ENCODE measurements at regions of chr7 and their contacts with region 1.

Region 1: DNA sequence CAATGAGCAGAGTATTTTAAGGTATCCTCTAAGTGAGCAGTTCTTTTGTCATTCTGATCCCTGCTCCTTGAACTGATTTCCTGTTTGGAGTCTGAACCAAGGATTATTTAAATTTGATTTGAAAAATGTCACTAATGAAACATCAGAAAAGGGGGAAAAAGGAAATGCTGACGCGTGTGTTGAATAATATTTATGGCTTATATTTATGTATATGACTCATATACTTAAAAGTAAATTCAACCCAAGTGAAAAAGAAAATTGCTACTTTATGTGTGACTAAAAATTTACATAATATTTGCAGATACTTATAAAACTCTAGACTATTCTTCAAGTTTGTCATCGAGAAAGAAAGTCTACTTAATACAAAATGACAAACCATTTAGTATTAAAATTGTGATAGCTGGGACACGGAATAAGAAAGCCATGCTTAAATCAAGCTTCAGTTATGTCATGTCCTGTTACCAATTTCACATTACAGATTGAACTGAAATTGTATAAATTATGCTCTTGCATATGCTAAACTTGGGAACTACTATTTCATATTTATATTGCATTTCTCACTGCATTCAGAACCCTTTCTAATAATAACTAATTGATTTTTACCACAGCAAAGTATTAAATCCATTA is 649.9 kb downstream of the MAGI2 start:
- DNase-seq: no peak
- ATAC-seq: no peak
- H3K4me3 ChIP-seq: no peak overlapping the region
- H3K27ac ChIP-seq: no peak overlapping the region
- H3K4me1 ChIP-seq: no peaks in the 10 kb centered on the region
- H3K27me3 ChIP-seq: no peaks in the 10 kb centered on the region
- CTCF ChIP-seq: no peak

Region 2: DNA sequence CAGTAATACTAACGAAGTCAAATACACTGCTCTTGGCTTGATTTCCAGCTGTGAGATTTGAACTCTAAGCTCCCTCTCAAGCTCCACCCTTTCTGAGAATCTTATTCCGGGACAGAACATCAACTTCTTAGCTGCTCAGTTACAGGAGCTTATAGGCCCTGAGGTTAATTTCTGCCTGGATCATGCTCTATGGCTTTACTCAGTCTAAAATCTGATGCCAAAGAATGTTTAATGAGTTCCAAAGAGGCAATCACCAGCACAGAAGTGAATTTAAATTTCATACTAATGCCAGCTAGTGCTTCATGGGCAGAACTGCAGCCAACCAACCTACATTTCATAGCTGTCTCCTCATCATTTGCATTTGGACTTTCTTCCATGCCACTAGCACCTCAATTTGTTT is 57.3 kb before region 1 on chr7:
- CTCF ChIA-PET with region 1: no interaction called
- POLR2A ChIA-PET with region 1: no interaction called
- in situ Hi-C with region 1: no loop called
- intact Hi-C with region 1: no loop called
- DNase-seq: no peak
- ATAC-seq: no peak
- H3K4me3 ChIP-seq: no peak overlapping the region
- H3K27ac ChIP-seq: no peak overlapping the region
- H3K4me1 ChIP-seq: no peaks in the 10 kb centered on the region
- H3K27me3 ChIP-seq: no peaks in the 10 kb centered on the region
- CTCF ChIP-seq: no peak; the same call in 1 of the 2 replicates

Region 3: DNA sequence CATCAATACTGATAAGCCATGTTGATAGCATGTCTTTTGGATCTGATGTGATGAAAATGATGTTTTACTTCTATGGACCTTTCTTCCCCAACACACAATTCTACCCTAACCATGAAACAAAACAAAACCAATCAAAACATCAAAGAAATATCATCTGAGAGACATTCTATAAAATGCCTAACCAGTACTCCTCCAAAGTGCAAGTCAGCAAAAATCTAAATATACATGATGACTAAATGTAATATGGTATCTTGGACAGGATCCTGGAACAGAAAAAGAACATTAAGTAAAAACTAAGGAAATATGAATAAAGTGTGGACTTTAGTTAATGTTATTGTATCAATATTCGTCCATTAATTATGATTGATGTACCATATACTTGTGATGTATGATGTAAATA is 24.7 kb after region 1 on chr7:
- CTCF ChIA-PET with region 1: interaction called, 12 read pairs
- POLR2A ChIA-PET with region 1: no interaction called
- in situ Hi-C with region 1: no loop called
- intact Hi-C with region 1: no loop called
- DNase-seq: no peak
- ATAC-seq: no peak
- H3K4me3 ChIP-seq: no peak overlapping the region
- H3K27ac ChIP-seq: no peak overlapping the region
- H3K4me1 ChIP-seq: no peaks in the 10 kb centered on the region
- H3K27me3 ChIP-seq: no peaks in the 10 kb centered on the region
- CTCF ChIP-seq: no peak

Measured in Panc1 (cell line).